ENCODE measurements at regions of chr15 and their contacts with region 1.

Region 1: DNA sequence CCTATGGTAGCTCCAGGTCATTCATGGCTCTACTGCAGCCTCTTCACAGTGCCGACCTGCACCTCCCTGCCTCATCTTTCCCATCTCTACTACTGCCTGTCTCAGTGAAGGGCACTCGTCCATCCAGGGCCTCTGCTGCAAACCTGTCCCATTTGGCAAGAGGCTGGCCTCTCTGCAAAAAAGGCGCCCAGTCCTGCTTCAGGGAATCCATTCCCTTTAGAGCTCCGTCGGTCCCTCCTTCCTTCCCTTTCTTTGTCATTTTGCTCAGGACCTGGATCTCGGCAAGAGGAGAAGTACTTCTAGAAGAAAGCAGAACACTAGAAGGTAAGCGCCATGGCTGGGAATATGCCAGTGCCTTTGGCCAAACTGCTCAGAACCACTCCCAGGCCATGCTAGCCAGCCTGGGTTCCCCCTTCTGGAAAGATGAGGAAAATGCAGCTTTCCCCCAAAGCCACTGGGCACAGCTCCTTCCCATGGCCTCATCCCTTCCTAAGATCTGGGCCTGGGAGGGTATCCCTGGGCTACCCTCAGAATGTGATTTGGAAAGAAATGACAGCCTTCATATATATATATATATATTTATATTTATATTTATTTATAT is 6.4 kb upstream of the ISL2 start:
- DNase-seq: peak; percentile 46
- ATAC-seq: peak; percentile 73
- H3K4me3 ChIP-seq: no peak overlapping the region
- H3K27ac ChIP-seq: no peak overlapping the region
- H3K4me1 ChIP-seq: peaks cover 6% of the 10 kb centered on the region; the same call in 1 of the 2 replicates
- H3K27me3 ChIP-seq: peaks cover 3% of the 10 kb centered on the region; the same call in 1 of the 2 replicates
- CTCF ChIP-seq: peak; percentile 56
- POLR2A ChIP-seq: no peak
- RAD21 ChIP-seq: peak; percentile 52

Region 2: DNA sequence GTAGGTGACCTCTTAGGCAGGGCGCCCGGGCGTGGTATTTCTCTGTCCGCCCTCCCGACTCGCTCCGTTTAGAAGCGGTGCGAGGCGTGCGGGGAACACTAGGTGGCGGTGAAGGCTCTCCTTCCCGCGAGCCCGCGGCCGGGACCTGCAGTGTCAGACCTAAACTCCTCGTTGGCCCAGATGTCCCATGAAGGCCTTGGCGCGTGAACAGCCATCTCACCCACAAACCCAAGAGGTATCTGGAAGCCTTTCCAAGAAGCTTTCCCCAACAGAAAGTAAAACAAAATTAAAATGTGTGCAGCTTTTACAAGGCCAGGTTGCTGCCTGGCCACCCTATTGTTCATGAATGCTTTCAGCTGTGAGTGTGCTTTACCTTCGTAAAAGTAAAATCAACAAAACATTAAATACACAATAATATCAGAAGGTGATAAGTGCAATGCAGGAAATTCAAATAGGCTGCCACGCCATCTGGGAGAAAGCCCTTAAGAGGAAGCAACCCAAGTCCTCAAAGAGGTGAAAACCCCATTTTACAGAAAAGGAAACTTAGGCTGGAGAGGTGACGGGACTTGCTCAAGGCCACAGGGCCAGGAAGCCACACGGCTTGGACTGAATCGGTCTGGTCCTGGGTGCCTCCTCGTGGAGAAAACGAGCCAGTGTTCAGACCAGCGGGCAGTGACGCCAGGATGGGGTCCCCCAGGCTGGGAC is 139.2 kb before region 1 on chr15:
- CTCF ChIA-PET with region 1: interaction called, 4 read pairs
- POLR2A ChIA-PET with region 1: no interaction called
- dilution Hi-C with region 1: no loop called
- in situ Hi-C with region 1: loop called (anchors 5 kb)
- intact Hi-C with region 1: loop called (anchors 1 kb)
- DNase-seq: peak; percentile 62
- ATAC-seq: peak; percentile 95
- H3K4me3 ChIP-seq: peak overlapping the region; percentile 14; the same call in 1 of the 2 replicates
- H3K27ac ChIP-seq: no peak overlapping the region
- H3K4me1 ChIP-seq: peaks cover 9% of the 10 kb centered on the region
- H3K27me3 ChIP-seq: no peaks in the 10 kb centered on the region; the same call in 1 of the 2 replicates
- CTCF ChIP-seq: peak; percentile 92
- POLR2A ChIP-seq: no peak
- RAD21 ChIP-seq: peak; percentile 93

Region 3: DNA sequence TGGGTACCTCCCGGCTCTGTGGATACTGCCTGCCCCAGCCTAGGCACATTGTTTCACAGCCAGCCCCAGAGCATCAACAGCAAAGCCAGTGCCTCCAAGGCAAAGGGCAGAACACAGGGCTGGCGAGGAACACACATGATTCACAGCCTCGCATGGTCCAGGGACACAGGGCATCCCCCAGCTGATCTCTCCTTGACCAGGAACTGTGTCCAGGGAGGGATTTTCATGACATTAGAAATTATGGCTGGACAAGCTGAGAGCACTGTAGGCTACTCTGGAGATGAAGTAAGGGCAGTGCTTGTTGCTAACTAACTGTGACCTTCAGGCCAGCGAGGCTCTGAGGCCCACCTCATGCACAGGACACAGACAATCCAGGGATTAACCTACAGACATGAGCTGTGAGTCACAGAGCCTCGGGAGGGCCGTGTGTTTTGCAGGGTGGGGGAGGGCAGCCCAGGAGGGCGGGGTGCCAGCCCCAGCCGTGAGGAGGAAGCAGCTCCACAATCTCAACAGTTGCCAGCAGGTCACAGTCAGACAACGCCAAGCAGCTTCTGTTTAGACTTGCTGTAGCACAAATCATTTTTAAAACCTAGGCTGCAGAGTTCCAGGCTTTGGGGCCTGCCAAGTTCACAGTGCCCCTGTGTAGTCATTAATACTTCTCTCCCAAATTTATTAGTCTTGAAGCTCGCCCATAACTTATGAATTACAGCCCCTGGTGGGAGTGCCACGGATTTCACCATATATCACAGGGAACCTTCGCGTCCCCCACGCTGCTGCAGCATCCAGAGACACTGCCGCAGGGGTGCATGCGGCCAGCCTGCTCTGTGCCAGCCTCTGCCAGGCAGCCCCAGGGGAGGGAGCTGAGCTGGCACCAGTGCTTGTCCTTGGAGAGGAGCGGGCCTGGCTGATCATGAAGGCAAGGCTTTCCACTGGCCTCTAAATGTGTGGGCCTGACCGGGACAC is 133.6 kb before region 1 on chr15:
- CTCF ChIA-PET with region 1: interaction called, 4 read pairs
- POLR2A ChIA-PET with region 1: no interaction called
- dilution Hi-C with region 1: no loop called
- in situ Hi-C with region 1: loop called (anchors 5 kb)
- intact Hi-C with region 1: no loop called
- DNase-seq: peak; percentile 89
- ATAC-seq: peak; percentile 88
- H3K4me3 ChIP-seq: no peak overlapping the region
- H3K27ac ChIP-seq: peak overlapping the region; percentile 31; the same call in 1 of the 2 replicates
- H3K4me1 ChIP-seq: peaks cover 25% of the 10 kb centered on the region
- H3K27me3 ChIP-seq: no peaks in the 10 kb centered on the region
- CTCF ChIP-seq: no peak
- POLR2A ChIP-seq: no peak
- RAD21 ChIP-seq: no peak

Region 4: DNA sequence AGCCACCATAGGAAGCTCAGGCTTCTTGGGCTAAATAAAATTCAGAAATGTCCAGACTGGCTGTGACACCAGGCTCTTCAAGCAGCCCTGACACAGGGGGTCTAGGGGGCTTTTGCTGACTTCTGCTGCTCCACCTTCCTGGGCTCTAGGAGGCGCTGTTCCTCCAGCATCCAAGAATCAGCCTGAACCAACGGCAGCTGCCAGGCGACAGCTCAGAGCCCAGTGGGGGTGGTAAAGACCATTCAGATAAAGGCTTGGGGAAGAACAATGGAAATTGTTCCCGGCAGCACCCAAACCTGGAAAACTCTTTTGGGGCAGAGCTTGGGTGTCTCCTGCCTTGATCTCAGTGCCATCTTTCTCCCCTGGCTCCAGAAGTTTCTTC is 643.2 kb after region 1 on chr15:
- CTCF ChIA-PET with region 1: no interaction called
- POLR2A ChIA-PET with region 1: no interaction called
- dilution Hi-C with region 1: no loop called
- in situ Hi-C with region 1: no loop called
- intact Hi-C with region 1: no loop called
- DNase-seq: peak; percentile 20
- ATAC-seq: no peak; the same call in 1 of the 2 replicates
- H3K4me3 ChIP-seq: no peak overlapping the region
- H3K27ac ChIP-seq: no peak overlapping the region
- H3K4me1 ChIP-seq: no peaks in the 10 kb centered on the region
- H3K27me3 ChIP-seq: peaks cover 40% of the 10 kb centered on the region
- CTCF ChIP-seq: peak; percentile 44
- POLR2A ChIP-seq: no peak
- RAD21 ChIP-seq: peak; percentile 55